PC-9 (cell line): ENCODE measurements at regions of chr6 and their contacts with region 1.

Region 1: GRCh38 chr6:79070206-79070825 is 7.7 kb downstream of the PHIP start:
- DNase-seq: no peak
- H3K4me3 ChIP-seq: no peak overlapping the region
- H3K27ac ChIP-seq: no peak overlapping the region
- H3K4me1 ChIP-seq: 0 out of 2 replicates have a peak, but pooled peaks cover 6% of the 10 kb centered on the region
- H3K27me3 ChIP-seq: no peaks in the 10 kb centered on the region
- CTCF ChIP-seq: no peak

Region 2: GRCh38 chr6:79034865-79035264 is 35.5 kb before region 1 on chr6:
- CTCF ChIA-PET with region 1: no interaction called
- POLR2A ChIA-PET with region 1: no interaction called
- intact Hi-C with region 1: loop called (anchors 5 kb)
- DNase-seq: no peak
- H3K4me3 ChIP-seq: no peak overlapping the region
- H3K27ac ChIP-seq: no peak overlapping the region
- H3K4me1 ChIP-seq: no peaks in the 10 kb centered on the region
- H3K27me3 ChIP-seq: no peaks in the 10 kb centered on the region
- CTCF ChIP-seq: no peak

Region 3: GRCh38 chr6:80714516-80714915 is 1644.2 kb after region 1 on chr6:
- CTCF ChIA-PET with region 1: no interaction called
- POLR2A ChIA-PET with region 1: interaction called, 12 read pairs
- intact Hi-C with region 1: no loop called
- DNase-seq: no peak
- H3K4me3 ChIP-seq: no peak overlapping the region
- H3K27ac ChIP-seq: no peak overlapping the region
- H3K4me1 ChIP-seq: no peaks in the 10 kb centered on the region
- H3K27me3 ChIP-seq: no peaks in the 10 kb centered on the region
- CTCF ChIP-seq: no peak